ENCODE measurements at regions of chr14 and their contacts with region 1.

Region 1: DNA sequence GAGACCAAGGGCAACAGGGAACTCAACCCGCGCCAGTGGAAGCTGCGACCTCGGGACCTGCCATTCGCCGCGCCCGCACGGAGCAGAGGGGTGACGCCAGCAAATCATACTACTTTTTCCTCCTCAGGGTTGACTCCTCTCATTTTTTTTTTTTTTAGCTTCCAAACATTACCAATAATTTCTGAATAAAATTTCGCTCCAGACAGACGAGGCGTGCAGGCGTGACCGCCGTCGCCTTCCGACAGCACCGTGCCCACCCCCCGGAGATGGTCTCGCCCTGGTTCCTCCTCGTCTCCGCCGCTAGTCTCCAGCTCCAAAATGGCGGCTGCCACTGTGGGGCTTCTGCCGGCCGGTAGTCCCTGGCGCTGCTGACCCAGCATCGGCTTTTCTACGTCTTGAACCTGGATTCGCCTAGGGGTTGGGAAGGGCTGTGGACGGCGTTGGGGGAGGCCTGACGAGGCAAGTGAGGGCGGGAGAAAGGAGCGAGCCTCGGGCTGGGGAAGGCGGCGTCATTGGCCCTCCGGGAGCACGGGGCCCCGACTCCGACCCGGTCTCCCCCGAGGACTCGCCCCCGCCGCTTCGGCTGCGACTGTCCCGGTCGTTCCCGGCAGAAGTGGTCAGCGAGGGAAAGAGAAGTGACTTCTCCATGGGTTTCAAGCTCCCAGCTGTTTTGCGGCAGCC is at the starts of genes CPSF2 and NDUFB1:
- DNase-seq: peak; percentile 86
- H3K4me3 Mint-ChIP-seq: peak within 1 kb of the TSS; percentile 86
- H3K27ac Mint-ChIP-seq: peak within 1 kb of the TSS; percentile 100
- H3K4me1 Mint-ChIP-seq: peaks cover 36% of the 10 kb centered on the region
- H3K27me3 Mint-ChIP-seq: no peaks in the 10 kb centered on the region
- total RNA-seq, gene CPSF2: 74.4 to 94.2 TPM
- total RNA-seq, gene NDUFB1: 109 to 143 TPM

Region 2: DNA sequence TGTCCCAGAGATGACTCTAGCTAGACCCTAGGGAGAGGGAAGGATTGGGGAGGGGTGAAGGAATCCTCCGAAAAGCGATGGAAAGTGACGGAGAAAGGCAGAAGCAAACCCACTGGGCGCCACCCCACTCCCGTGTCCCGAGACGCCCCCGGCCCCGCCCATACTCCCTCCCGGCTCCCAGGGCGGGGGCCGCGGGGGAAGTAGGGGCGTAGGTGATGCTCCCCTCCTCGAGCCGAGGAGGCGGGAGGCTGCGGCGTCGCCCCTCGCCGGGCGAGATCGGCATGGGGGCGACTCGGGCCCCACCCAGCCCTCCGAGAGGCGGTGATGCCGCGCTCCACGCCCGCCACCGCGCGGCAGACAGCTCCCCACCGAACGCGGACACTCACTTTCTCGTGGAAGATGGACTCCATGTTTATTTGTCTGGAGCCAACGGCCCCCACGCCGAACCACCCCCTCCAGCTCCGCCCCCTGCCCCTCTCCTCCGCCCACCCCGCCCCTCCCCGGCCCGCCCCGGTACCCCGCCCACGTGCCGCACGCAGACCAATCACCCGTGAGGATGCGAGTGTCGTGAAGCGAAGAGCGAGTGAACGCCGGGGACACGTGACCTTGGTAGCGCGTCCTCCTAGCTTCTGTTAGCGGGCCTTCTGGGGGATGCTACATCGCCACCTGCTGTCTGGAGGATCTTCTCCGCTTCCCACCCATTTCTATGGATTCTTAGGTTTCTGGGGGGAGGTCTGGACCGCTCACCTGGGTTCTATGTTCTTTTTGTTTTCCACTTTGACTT is 15.5 kb before region 1 on chr14 and contains the start of gene ATXN3:
- CTCF ChIA-PET with region 1: interaction called, 132 read pairs
- POLR2A ChIA-PET with region 1: interaction called, 6 read pairs
- DNase-seq: peak; percentile 96
- H3K4me3 Mint-ChIP-seq: peak within 1 kb of the TSS; percentile 94
- H3K27ac Mint-ChIP-seq: peak within 1 kb of the TSS; percentile 96
- H3K4me1 Mint-ChIP-seq: peaks cover 47% of the 10 kb centered on the region
- H3K27me3 Mint-ChIP-seq: no peaks in the 10 kb centered on the region
- total RNA-seq, gene ATXN3: 28.8 to 30.3 TPM

Region 3: GRCh38 chr14:92135267-92135666 is 13.5 kb after region 1 on chr14:
- CTCF ChIA-PET with region 1: interaction called, 11 read pairs
- POLR2A ChIA-PET with region 1: no interaction called
- DNase-seq: no peak
- H3K4me3 Mint-ChIP-seq: no peak overlapping the region
- H3K27ac Mint-ChIP-seq: no peak overlapping the region
- H3K4me1 Mint-ChIP-seq: peaks cover under 1% of the 10 kb centered on the region
- H3K27me3 Mint-ChIP-seq: no peaks in the 10 kb centered on the region

Region 4: GRCh38 chr14:92160619-92161018 is 38.8 kb after region 1 on chr14:
- CTCF ChIA-PET with region 1: no interaction called
- POLR2A ChIA-PET with region 1: no interaction called
- DNase-seq: no peak
- H3K4me3 Mint-ChIP-seq: no peak overlapping the region
- H3K27ac Mint-ChIP-seq: no peak overlapping the region
- H3K4me1 Mint-ChIP-seq: peaks cover 8% of the 10 kb centered on the region
- H3K27me3 Mint-ChIP-seq: no peaks in the 10 kb centered on the region